HepG2 (cell line): ENCODE measurements at regions of chr5 and their contacts with region 1.

Region 1: DNA sequence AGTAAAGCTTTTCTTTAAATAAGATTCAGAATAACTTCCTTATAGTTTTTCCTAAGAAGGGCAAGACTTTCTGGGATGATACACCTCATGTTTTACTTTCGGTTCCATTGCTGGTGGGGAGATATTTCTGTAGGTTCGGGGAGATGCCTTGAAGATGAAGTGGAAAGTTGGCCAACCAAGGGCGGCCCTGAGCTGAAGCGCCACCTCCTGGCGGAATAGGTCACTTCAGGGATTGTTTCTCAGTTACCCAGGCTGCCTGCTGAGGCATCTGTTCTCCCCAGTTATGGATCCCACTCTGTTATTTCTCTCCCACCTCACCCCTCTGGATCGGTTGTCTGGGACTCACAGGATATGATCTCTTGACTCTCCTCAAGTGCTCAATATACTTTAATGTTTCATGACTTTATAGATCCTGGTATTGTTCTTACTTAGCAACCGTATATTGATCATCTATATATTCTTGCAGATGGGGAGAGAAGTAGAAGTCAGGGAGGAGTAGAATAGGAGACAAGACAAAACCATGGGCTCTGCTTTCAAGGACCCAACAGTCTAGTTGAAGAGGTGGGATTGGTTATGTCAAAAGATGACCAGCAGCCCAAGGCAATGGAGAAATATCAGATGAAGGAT is 23.4 kb downstream of the MEGF10 start:
- DNase-seq: peak; percentile 16
- ATAC-seq: peak; percentile 90
- H3K4me3 ChIP-seq: no peak overlapping the region
- H3K27ac ChIP-seq: no peak overlapping the region
- H3K4me1 ChIP-seq: no peaks in the 10 kb centered on the region
- H3K27me3 ChIP-seq: no peaks in the 10 kb centered on the region
- CTCF ChIP-seq: peak; percentile 82
- EP300 ChIP-seq: no peak
- POLR2A ChIP-seq: no peak
- RAD21 ChIP-seq: 0 out of 2 replicates have a peak, but pooled peaks have one; percentile 14

Region 2: DNA sequence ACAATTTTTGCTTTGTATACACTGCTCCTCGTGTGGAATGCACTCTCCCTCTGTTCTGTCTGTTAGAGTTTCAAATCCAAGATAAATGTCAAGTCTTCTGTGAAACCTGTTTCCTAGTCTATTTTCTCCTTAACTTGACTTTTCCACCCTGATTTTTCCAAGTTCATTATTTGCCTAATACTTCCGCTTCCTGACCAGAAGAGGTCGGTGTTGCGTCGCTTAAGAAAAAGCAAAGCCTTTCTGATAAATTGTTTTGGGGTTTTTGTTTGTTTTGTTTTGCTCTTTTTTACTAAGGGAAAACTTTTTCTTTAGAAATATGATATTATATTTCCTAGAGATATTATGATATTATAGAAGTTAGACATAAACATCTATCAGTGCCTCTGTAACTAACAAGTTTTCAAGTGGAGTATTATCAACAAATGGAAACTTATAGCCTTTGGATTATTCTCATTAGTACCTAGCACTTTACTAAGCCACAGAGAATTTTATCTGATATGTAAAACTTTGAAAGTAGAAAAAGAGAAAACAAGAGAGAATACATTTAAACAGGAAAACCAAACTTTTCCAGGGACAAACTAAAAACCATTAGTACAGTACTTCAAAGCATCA is 657.5 kb before region 1 on chr5:
- CTCF ChIA-PET with region 1: interaction called, 3 read pairs
- POLR2A ChIA-PET with region 1: no interaction called
- in situ Hi-C with region 1: loop called (anchors 10 kb)
- intact Hi-C with region 1: loop called (anchors 5 kb)
- DNase-seq: peak; percentile 41
- ATAC-seq: no peak
- H3K4me3 ChIP-seq: no peak overlapping the region
- H3K27ac ChIP-seq: no peak overlapping the region
- H3K4me1 ChIP-seq: peaks cover 43% of the 10 kb centered on the region
- H3K27me3 ChIP-seq: no peaks in the 10 kb centered on the region
- CTCF ChIP-seq: peak; percentile 77
- EP300 ChIP-seq: no peak
- POLR2A ChIP-seq: no peak
- RAD21 ChIP-seq: peak; percentile 51

Region 3: GRCh38 chr5:126837906-126838539 is 475.9 kb before region 1 on chr5:
- CTCF ChIA-PET with region 1: interaction called, 6 read pairs
- POLR2A ChIA-PET with region 1: no interaction called
- in situ Hi-C with region 1: no loop called
- intact Hi-C with region 1: loop called (anchors 2 kb)
- DNase-seq: no peak
- ATAC-seq: no peak
- H3K4me3 ChIP-seq: no peak overlapping the region
- H3K27ac ChIP-seq: no peak overlapping the region
- H3K4me1 ChIP-seq: no peaks in the 10 kb centered on the region
- H3K27me3 ChIP-seq: no peaks in the 10 kb centered on the region
- CTCF ChIP-seq: 0 out of 2 replicates have a peak, but pooled peaks have one; percentile 5
- EP300 ChIP-seq: no peak
- POLR2A ChIP-seq: no peak
- RAD21 ChIP-seq: no peak

Region 4: GRCh38 chr5:127254729-127255284 is 59.2 kb before region 1 on chr5:
- CTCF ChIA-PET with region 1: no interaction called
- POLR2A ChIA-PET with region 1: no interaction called
- in situ Hi-C with region 1: no loop called
- intact Hi-C with region 1: no loop called
- DNase-seq: no peak
- ATAC-seq: no peak
- H3K4me3 ChIP-seq: no peak overlapping the region
- H3K27ac ChIP-seq: no peak overlapping the region
- H3K4me1 ChIP-seq: no peaks in the 10 kb centered on the region
- H3K27me3 ChIP-seq: no peaks in the 10 kb centered on the region
- CTCF ChIP-seq: no peak
- EP300 ChIP-seq: no peak
- POLR2A ChIP-seq: no peak
- RAD21 ChIP-seq: no peak

Region 5: DNA sequence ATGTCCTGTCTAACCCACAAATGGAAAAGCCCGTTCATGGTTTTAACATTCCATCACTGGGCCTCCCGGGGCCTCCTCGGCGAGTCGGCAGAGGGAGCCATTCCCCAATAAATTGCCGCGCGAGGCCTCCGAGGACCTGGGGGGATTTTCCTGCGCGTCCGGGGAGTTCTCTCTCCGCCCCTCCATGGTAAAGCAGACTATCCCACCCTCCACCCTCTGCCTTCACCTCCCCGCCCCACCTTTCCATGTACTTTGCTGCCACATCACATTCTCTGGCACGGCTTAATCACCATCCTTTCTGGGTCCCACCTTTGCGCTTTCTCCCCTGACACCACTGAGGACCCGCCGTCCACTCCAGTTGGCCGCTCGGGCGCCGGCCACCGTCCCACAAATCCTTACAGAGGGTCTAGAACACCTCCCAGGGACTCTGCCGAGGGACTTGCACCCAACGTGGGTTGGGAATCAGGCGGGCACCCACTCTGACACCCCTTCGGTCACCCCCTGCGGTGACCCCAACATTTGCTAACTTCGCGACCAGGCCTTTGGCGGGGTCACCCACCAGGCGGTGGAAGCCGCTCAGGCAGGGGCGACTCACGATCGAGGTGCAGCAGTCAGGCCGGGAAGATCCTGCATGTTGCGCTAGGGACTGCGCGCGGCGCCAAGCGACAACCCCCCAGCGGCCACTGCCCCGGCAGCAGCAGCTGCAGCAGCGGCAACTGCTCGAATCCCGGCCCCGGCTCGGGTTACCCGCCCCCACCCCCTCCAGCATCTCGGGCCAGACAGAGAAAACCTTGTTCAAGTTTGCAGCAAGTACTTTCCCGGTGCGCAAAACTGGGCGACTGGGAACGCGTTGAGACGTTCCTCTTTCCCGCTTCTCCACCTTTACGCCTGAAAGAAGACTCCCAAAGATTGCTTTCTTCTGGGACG is 23.7 kb before region 1 on chr5 and contains the start of gene MEGF10:
- CTCF ChIA-PET with region 1: interaction called, 11 read pairs
- POLR2A ChIA-PET with region 1: no interaction called
- in situ Hi-C with region 1: no loop called
- intact Hi-C with region 1: loop called (anchors 1 kb)
- DNase-seq: peak; percentile 7
- ATAC-seq: peak; percentile 95
- H3K4me3 ChIP-seq: peak within 1 kb of the TSS in 1 of 3 experiments; percentile 27; a peak in 1 of 6 replicates
- H3K27ac ChIP-seq: no peak within 1 kb of the TSS
- H3K4me1 ChIP-seq: peaks cover 12% of the 10 kb centered on the region; the same call in 1 of the 2 replicates
- H3K27me3 ChIP-seq: peaks cover 0 to 23% of the 10 kb centered on the region in 2 experiments; a peak in 4 of 5 replicates
- CTCF ChIP-seq: peak; percentile 73
- EP300 ChIP-seq: no peak
- POLR2A ChIP-seq: no peak
- RAD21 ChIP-seq: peak; percentile 60
- total RNA-seq, gene MEGF10: not detected in 2 replicates